ENCODE measurements at regions of chr12 and their contacts with region 1.

Region 1: GRCh38 chr12:46342562-46343033 is 30.0 kb downstream of the SLC38A2 start:
- DNase-seq: peak; percentile 21
- ATAC-seq: peak; percentile 66
- H3K4me3 Mint-ChIP-seq: no peak overlapping the region
- H3K27ac Mint-ChIP-seq: no peak overlapping the region
- H3K4me1 Mint-ChIP-seq: peaks cover 5% of the 10 kb centered on the region
- H3K27me3 Mint-ChIP-seq: peaks cover 2% of the 10 kb centered on the region

Region 2: DNA sequence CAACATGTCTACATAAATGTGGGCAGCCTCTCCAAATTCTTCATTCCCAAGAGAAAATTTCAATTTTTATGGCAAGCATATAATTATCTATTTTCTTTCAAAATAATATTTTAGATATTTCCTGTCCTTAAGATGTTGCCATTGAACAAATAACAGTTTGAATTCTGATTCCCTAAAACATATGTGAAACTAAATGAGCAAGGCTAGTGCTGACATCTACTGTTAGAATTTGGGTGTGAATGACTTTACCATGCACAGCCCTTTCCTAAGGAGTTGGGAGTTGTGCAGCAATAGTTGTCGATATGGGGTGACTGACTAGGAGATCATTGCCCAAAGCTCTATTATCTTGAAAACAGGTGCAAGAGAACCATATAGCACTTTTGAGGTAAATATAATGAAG is 591.3 kb after region 1 on chr12:
- CTCF ChIA-PET with region 1: no interaction called
- POLR2A ChIA-PET with region 1: no interaction called
- intact Hi-C with region 1: loop called (anchors 5 to 10 kb)
- DNase-seq: no peak
- ATAC-seq: no peak
- H3K4me3 Mint-ChIP-seq: no peak overlapping the region
- H3K27ac Mint-ChIP-seq: no peak overlapping the region
- H3K4me1 Mint-ChIP-seq: no peaks in the 10 kb centered on the region
- H3K27me3 Mint-ChIP-seq: peaks cover 18% of the 10 kb centered on the region

Region 3: DNA sequence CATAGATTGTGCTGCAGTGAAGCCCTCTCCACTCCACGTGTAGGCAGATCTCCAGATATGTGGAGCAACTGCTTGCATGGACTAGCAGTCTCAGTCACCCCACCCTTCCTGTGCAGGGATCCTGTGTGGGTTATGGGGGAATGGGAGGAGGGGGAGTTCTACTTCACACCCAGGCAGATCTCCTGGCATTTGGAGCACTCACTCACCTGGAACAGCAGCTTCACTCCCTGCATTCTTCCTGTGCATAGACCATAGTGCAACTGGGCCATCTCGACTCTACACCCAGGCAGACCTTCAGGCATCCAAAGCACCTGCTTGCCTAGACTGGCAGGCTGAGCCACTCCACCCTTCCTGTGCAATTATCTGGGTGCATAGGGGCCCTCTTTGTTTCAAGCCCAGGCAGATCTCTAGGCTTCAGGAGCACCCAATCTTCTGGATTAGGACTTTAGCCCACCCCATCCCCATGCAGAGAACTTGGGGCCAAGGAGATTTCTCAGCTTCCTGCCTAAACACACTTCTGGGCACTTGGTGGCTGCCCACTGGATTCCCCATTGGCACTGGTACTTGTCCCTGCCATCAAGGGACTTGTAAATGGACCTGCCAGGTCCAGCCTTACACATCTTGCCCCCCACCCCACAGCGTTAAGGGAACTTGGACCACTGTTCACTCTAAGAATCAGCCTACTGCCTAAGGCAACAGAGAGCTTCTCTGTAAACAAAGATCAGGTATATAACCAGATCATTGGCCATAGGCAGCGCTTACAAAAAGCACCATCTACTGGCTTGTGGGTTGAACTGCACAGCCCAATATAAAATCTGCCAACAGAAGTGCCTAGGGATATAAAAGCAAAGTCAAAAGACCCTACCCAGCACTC is 641.0 kb after region 1 on chr12:
- CTCF ChIA-PET with region 1: no interaction called
- POLR2A ChIA-PET with region 1: no interaction called
- intact Hi-C with region 1: loop called in 1 of 2 experiments (anchors 2 kb)
- DNase-seq: peak; percentile 44
- ATAC-seq: peak; percentile 66
- H3K4me3 Mint-ChIP-seq: no peak overlapping the region
- H3K27ac Mint-ChIP-seq: no peak overlapping the region
- H3K4me1 Mint-ChIP-seq: peaks cover 4% of the 10 kb centered on the region
- H3K27me3 Mint-ChIP-seq: peaks cover 19% of the 10 kb centered on the region

Region 4: GRCh38 chr12:47021298-47021697 is 678.7 kb after region 1 on chr12:
- CTCF ChIA-PET with region 1: no interaction called
- POLR2A ChIA-PET with region 1: no interaction called
- intact Hi-C with region 1: loop called (anchors 1 kb)
- DNase-seq: no peak
- ATAC-seq: peak; percentile 75
- H3K4me3 Mint-ChIP-seq: no peak overlapping the region
- H3K27ac Mint-ChIP-seq: no peak overlapping the region
- H3K4me1 Mint-ChIP-seq: peaks cover 3% of the 10 kb centered on the region
- H3K27me3 Mint-ChIP-seq: peaks cover 7% of the 10 kb centered on the region

Measured in activated CD4-positive, alpha-beta T cell treated with anti-CD3 and anti-CD28 coated beads for 36 hours (primary cell).